Activated T-helper 1 cell treated with anti-CD3 and anti-CD28 coated beads, Interleukin-12 subunit alpha, Interleukin-12 subunit beta, Interleukin-2, Interleukin-4 antibody, amounts not matched to agents 30 ng/mL and 10 ng/mL and 1 ng/mL, durations not matched to agents 14 hours and 24 hours and 36 hours (primary cell): ENCODE measurements at regions of chr12 and their contacts with region 1.

Region 1: DNA sequence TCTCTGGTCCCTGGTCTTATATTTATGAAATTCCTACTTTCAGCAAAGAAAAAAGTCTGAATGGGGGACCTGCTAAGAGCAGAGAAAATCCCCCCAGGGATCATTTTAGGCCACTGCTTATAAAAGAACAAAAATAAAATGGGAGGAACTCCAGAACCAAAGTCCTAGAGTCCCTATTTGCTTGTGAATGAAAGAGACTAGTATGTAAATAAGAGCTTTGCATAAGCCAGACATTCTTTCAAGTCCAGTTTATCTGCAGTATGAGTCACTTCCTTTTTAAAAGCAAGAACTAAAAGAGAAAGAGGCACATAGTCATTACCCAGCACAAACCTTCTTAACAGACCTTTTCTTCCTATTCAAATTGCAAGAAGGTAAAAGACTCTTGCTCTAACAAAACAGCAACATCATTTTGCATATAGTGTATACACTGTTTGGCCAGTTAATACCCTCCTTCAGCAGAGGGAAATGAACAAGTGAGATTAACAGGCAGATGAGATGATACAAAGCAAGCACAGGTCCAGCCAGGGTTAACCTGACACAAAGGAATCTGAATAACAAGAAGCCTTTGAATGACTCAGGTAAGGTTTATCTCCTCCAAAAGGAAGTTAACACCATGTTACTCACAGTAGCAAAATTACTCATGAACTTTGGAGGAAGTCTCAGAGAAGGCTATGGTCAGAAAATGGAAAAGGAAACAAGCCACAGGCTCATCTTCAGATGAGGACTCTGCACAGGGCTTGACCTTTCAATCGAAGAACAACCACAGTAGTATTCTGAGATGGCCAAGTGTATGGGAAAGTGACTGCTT is 87.3 kb downstream of the PHLDA1 start:
- DNase-seq: peak; percentile 27
- H3K4me3 Mint-ChIP-seq: peak overlapping the region; percentile 65
- H3K27ac Mint-ChIP-seq: peak overlapping the region; percentile 98
- H3K4me1 Mint-ChIP-seq: peaks cover 30% of the 10 kb centered on the region
- H3K27me3 Mint-ChIP-seq: no peaks in the 10 kb centered on the region

Region 2: GRCh38 chr12:75728826-75729225 is 215.5 kb before region 1 on chr12:
- intact Hi-C with region 1: no loop called
- DNase-seq: no peak
- H3K4me3 Mint-ChIP-seq: no peak overlapping the region
- H3K27ac Mint-ChIP-seq: no peak overlapping the region
- H3K4me1 Mint-ChIP-seq: no peaks in the 10 kb centered on the region
- H3K27me3 Mint-ChIP-seq: peaks cover 4% of the 10 kb centered on the region

Region 3: DNA sequence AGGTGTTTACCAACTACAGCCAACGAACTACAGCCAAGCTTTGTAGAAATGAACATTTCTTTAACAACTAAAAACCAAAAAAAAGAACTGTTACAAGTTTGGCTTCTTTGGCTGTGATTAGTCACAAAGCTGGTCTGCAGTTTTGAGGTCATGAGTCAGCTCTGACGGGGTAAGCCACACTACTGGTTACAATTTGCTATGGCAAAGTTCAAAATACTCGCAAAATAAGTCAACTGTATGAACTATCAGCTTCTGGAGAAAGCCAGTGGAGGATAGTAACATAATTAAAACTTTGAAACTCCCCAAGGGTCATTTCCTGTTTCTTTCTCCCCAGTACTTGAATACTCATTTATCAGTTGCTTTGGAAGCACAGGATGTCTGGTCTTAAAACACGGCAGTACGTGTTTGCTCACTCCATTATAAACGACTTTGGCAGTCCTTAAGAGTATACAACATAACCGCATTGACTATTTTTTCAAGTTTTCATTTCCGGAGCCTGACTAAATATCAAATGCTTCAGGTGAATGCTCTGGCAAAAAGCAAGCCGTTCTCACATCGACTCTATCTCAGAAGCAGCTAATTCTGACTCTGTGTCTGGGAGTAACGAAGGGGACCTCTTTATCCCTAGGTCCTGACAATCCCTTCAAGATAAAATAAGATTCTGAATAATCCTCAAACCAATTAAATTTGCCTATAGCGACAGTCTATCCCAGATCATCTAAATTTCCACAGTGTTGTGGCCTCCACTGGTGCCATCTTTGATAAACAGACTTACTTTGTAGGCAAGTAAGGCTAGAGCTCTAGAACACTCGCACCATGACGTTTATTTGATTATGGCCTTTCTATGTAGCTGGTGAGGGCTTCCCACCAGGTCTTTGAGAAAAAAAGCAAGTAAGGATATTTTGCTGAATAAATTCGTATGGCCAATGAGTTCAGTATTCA is 76.7 kb after region 1 on chr12:
- intact Hi-C with region 1: loop called (anchors 1 kb)
- DNase-seq: peak; percentile 68
- H3K4me3 Mint-ChIP-seq: peak overlapping the region; percentile 74
- H3K27ac Mint-ChIP-seq: peak overlapping the region; percentile 99
- H3K4me1 Mint-ChIP-seq: peaks cover 73% of the 10 kb centered on the region
- H3K27me3 Mint-ChIP-seq: no peaks in the 10 kb centered on the region

Region 4: DNA sequence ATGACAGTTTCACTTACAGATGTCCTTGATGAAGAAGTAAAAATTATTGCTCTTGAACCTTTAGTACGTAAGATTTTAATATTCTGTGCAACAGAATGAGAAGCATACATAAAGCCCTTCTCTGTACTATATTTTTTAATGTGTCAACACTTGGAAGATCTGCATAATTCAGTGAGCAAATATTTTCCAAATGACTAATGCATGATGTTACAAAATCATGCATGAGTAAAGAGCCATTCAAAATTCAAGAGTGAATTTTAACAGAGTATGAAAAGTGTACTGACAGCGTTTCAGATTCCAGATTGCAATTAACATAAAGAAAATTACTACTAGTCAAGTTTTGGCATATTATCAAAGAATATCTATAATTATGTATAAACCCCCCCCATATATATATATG is 505.3 kb after region 1 on chr12:
- intact Hi-C with region 1: loop called (anchors 5 kb)
- DNase-seq: no peak
- H3K4me3 Mint-ChIP-seq: no peak overlapping the region
- H3K27ac Mint-ChIP-seq: no peak overlapping the region
- H3K4me1 Mint-ChIP-seq: peaks cover 33% of the 10 kb centered on the region
- H3K27me3 Mint-ChIP-seq: no peaks in the 10 kb centered on the region

Region 5: DNA sequence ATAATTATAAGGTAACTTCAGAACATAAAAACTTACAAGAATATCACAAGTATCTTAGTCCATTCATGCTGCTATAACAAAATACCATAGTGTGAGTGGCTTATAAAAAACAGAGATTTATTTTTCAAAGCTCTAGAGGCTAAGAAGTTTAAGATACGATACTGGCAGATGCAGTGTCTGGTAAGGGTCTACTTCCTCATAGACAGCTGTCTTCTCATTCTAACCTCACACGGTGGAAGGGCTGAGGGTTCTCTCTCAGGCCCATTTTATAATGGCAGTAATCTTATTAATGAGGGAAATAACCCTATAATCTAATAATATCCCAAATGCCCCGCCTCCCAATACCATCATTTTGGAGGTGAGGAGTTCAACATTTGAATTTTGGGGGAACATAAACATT is 639.0 kb after region 1 on chr12:
- intact Hi-C with region 1: no loop called
- DNase-seq: no peak
- H3K4me3 Mint-ChIP-seq: no peak overlapping the region
- H3K27ac Mint-ChIP-seq: no peak overlapping the region
- H3K4me1 Mint-ChIP-seq: peaks cover 9% of the 10 kb centered on the region
- H3K27me3 Mint-ChIP-seq: no peaks in the 10 kb centered on the region